ENCODE measurements at regions of chr18 and their contacts with region 1.

Region 1: GRCh38 chr18:45974088-45974536 is 7.0 kb upstream of the EPG5 start:
- DNase-seq: peak in 3 of 6 donors; percentile 38 to 61 (median 49)
- ATAC-seq: peak; percentile 61 to 86 (median 81)
- H3K4me3 ChIP-seq: no peak overlapping the region
- H3K27ac ChIP-seq: no peak overlapping the region
- H3K4me1 ChIP-seq: peaks cover 0 to 15% (median 0%) of the 10 kb centered on the region in 3 donors
- H3K27me3 ChIP-seq: no peaks in the 10 kb centered on the region
- CTCF ChIP-seq: peak; percentile 36 to 62 (median 52)

Region 2: GRCh38 chr18:45690975-45691815 is 282.9 kb before region 1 on chr18:
- intact Hi-C with region 1: loop called in 2 of 3 experiments (anchors 5 to 10 kb)
- DNase-seq: peak in 5 of 6 donors; percentile 46 to 85 (median 65)
- ATAC-seq: peak; percentile 82 to 98 (median 96)
- H3K4me3 ChIP-seq: no peak overlapping the region
- H3K27ac ChIP-seq: no peak overlapping the region
- H3K4me1 ChIP-seq: no peaks in the 10 kb centered on the region
- H3K27me3 ChIP-seq: no peaks in the 10 kb centered on the region
- CTCF ChIP-seq: peak; percentile 57 to 66 (median 62)

Region 3: GRCh38 chr18:45920367-45920766 is 53.7 kb before region 1 on chr18:
- intact Hi-C with region 1: no loop called
- DNase-seq: peak; percentile 76 to 93 (median 86)
- ATAC-seq: peak; percentile 79 to 97 (median 93)
- H3K4me3 ChIP-seq: no peak overlapping the region
- H3K27ac ChIP-seq: no peak overlapping the region
- H3K4me1 ChIP-seq: peaks cover 0 to 5% (median 0%) of the 10 kb centered on the region in 3 donors
- H3K27me3 ChIP-seq: no peaks in the 10 kb centered on the region
- CTCF ChIP-seq: no peak

Region 4: DNA sequence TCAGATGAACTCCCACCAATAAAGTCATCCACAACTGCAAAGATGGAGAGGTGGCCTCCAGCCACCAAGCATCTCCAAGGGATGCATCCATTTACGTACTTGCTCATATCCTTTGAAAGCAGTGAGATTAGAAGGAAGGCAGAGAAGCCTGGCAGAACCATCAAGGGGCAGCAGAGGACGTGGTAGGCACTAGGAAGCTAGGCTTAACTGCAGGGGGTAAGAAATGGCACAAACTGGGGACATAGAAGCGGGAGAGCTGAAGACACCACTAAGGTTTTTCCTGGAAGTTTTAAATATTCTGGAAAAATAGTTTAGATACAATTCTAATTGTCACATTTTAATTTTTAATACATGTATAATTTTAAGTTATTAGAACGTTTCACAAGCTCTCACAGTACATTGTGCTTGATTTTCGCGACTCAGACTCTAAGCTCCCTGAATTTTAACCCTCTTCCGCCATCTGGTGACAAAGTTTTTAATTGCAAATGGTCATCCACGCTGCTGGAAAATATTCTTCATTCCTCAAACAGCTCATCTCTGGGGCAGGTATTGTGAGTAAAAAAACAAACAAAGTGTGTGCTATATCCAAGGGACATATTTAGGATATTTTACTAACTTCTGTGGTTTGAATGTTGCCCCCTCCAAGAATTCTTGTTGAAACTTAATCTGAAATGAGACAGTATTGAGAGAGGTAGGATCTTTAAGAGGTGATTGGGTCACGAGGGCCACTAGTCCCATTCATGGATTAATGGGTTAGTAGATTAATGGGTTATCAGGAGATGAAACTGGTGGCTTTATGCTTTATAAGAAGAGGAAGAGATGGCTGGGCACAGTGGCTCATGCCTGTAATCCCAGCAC is 99.6 kb after region 1 on chr18:
- intact Hi-C with region 1: loop called in 1 of 3 experiments (anchors 10 kb)
- DNase-seq: peak in 2 of 6 donors; percentile 19 to 59
- ATAC-seq: peak; percentile 58 to 77 (median 70)
- H3K4me3 ChIP-seq: no peak overlapping the region
- H3K27ac ChIP-seq: no peak overlapping the region
- H3K4me1 ChIP-seq: peaks cover 0 to 14% (median 0%) of the 10 kb centered on the region in 3 donors
- H3K27me3 ChIP-seq: no peaks in the 10 kb centered on the region
- CTCF ChIP-seq: peak in 3 of 4 donors; percentile 41 to 55 (median 48)